Ovary (tissue), 10 donors: ENCODE measurements at regions of chr1 and their contacts with region 1.

Region 1: GRCh38 chr1:70354332-70355110 is at the start of gene ANKRD13C:
- DNase-seq: peak; percentile 93 to 97 (median 94)
- H3K4me3 ChIP-seq: peak within 1 kb of the TSS; percentile 77
- H3K27ac ChIP-seq: peak within 1 kb of the TSS; percentile 77
- H3K4me1 ChIP-seq: peaks cover 2% of the 10 kb centered on the region
- H3K27me3 ChIP-seq: no peaks in the 10 kb centered on the region
- CTCF ChIP-seq: no peak
- EP300 ChIP-seq: peak; percentile 10
- POLR2A ChIP-seq: peak; percentile 91
- total RNA-seq, gene ANKRD13C: 22.2 to 27.9 (median 24.4) TPM

Region 2: DNA sequence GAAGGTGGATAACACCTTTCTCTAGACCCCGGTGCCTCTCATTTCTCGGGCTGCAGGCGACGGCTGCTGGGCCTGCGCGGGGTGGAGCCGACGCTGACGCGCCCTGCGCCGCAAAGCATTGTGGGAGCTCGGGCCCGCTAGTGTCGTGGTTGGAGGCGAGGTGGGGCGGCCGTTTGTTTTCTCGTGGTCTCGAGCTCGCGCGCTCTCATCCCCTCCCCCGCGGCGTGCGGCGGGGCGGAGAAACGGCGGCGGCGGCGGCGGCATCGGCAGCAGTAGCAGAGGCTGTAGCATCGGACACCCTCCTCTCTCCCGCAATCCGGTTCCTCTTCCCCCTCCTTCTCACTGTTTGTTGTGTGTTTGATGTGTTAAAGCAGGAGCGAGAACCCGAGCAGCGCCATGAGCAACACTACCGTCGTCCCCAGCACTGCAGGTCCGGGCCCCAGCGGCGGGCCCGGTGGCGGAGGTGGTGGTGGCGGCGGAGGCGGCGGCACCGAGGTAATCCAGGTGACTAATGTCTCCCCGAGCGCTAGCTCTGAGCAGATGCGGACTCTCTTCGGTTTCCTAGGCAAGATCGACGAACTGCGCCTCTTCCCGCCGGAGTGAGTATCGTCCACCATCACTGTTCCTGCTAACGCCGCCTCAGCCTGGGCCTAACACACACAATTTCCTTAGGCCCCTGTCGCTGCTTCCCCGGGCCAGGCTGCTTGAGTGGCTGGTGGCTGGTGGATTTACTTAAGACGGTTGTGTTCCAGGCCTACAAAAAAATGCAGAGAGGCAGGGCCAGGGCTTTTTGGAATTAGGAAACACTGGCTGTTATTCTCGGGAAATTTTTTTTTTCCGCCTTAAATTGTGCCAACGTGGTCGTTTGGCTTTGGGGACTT is 133.0 kb before region 1 on chr1 and contains the start of gene SRSF11:
- intact Hi-C with region 1: no loop called
- DNase-seq: peak; percentile 96 to 98 (median 98)
- H3K4me3 ChIP-seq: peak within 1 kb of the TSS; percentile 55
- H3K27ac ChIP-seq: peak within 1 kb of the TSS; percentile 87 to 98
- H3K4me1 ChIP-seq: peaks cover 7% of the 10 kb centered on the region
- H3K27me3 ChIP-seq: no peaks in the 10 kb centered on the region
- CTCF ChIP-seq: peak in 2 of 3 donors; percentile 18 to 41
- EP300 ChIP-seq: no peak
- POLR2A ChIP-seq: peak; percentile 89
- total RNA-seq, gene SRSF11: 116 to 195 (median 153) TPM

Region 3: DNA sequence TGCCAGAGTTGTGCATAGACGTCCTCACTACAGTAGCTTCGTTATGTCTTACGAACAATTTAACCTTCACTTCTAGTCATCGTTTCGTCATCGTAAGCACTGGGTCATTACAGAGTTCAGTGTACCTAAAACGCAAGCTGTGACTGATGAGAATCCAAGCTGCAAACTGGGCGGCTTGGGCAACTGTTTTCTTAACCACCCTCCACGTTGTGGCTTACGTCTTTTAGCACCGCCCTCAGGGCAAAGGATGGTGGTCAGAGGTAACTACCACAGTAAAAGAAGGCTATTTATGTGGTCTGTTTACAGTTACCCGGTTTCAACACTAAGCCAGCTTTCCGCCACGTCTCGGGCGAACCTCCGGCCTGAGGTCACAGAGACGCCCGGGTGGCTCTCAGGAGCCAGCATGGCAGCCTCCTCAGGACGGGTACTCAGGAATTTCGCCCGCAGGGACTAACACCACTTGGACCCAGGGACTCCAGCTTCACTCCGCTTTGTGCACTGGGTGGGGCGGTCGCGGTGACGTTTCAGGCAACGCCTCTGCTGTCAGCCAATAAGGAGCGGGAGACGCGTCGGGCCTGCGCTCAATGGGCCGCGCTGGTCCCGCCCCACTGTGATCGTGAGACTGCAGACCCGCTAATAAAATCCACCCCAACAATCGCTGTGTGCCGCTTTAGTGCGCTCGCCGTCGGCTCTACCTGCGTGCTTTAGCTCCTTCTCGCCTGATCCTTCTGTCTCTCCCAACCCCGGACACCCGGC is 56.3 kb after region 1 on chr1 and contains the start of gene CTH:
- intact Hi-C with region 1: loop called in 2 of 4 experiments (anchors 10 kb)
- DNase-seq: peak; percentile 97 to 98 (median 97)
- H3K4me3 ChIP-seq: peak within 1 kb of the TSS; percentile 71
- H3K27ac ChIP-seq: peak within 1 kb of the TSS; percentile 73 to 96
- H3K4me1 ChIP-seq: peaks cover 2% of the 10 kb centered on the region
- H3K27me3 ChIP-seq: no peaks in the 10 kb centered on the region
- CTCF ChIP-seq: peak in 2 of 3 donors; percentile 13 to 28
- EP300 ChIP-seq: no peak
- POLR2A ChIP-seq: peak; percentile 97
- total RNA-seq, gene CTH: 4.7 to 36.2 (median 20.9) TPM